AG04450 (cell line): ENCODE measurements at regions of chr16 and their contacts with region 1.

Region 1: GRCh38 chr16:19001788-19002187 is 18.1 kb downstream of the TMC7 start:
- DNase-seq: no peak
- H3K4me3 ChIP-seq: no peak overlapping the region
- H3K27ac ChIP-seq: no peak overlapping the region
- H3K27me3 ChIP-seq: no peaks in the 10 kb centered on the region
- CTCF ChIP-seq: no peak

Region 2: GRCh38 chr16:19029980-19030379 is 28.2 kb after region 1 on chr16:
- CTCF ChIA-PET with region 1: no interaction called
- POLR2A ChIA-PET with region 1: no interaction called
- DNase-seq: no peak
- H3K4me3 ChIP-seq: no peak overlapping the region
- H3K27ac ChIP-seq: no peak overlapping the region
- H3K27me3 ChIP-seq: no peaks in the 10 kb centered on the region
- CTCF ChIP-seq: no peak

Region 3: DNA sequence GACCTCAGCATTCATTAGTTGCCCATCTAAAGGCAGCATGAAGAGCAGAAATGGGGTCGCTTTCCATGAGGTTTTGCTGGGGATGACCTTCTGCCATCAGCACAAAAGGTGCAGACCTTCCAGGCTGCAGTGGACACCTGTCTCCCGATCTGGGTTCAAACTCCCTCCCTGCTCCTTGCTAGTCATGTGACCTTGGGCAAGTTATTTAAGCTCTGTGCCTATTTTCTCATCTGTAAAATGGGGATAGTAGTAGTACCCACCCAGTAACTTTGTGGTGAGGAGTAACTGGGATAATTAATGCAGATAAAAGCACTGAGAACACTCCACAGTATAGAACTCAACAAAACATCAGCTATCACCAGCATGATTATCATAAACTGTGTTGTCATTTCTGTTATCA is 44.3 kb after region 1 on chr16:
- CTCF ChIA-PET with region 1: interaction called, 10 read pairs
- POLR2A ChIA-PET with region 1: no interaction called
- DNase-seq: no peak
- H3K4me3 ChIP-seq: no peak overlapping the region
- H3K27ac ChIP-seq: no peak overlapping the region
- H3K27me3 ChIP-seq: no peaks in the 10 kb centered on the region
- CTCF ChIP-seq: no peak

Region 4: DNA sequence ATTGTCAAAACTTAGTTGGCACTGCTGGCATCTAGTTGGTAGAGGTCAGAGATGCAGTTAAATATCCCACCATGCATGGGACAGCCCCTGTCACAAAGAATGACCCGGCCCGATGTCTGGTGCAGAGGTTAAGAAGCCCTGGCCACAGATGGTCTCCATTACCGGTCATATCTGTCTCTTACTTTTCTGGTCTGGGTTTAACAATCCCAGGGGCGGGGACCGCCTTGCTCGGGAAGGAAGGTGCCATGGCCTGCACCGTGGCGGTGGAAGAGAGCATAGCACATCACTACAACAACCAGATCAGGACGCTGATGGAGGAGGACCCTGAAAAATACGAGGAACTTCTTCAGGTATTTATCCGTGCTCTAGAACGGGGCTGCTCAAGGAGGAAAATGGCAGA is 73.7 kb after region 1 on chr16:
- CTCF ChIA-PET with region 1: no interaction called
- POLR2A ChIA-PET with region 1: no interaction called
- DNase-seq: no peak
- H3K4me3 ChIP-seq: no peak overlapping the region
- H3K27ac ChIP-seq: no peak overlapping the region
- H3K27me3 ChIP-seq: no peaks in the 10 kb centered on the region
- CTCF ChIP-seq: no peak